ENCODE measurements at regions of chrX and their contacts with region 1.

Region 1: DNA sequence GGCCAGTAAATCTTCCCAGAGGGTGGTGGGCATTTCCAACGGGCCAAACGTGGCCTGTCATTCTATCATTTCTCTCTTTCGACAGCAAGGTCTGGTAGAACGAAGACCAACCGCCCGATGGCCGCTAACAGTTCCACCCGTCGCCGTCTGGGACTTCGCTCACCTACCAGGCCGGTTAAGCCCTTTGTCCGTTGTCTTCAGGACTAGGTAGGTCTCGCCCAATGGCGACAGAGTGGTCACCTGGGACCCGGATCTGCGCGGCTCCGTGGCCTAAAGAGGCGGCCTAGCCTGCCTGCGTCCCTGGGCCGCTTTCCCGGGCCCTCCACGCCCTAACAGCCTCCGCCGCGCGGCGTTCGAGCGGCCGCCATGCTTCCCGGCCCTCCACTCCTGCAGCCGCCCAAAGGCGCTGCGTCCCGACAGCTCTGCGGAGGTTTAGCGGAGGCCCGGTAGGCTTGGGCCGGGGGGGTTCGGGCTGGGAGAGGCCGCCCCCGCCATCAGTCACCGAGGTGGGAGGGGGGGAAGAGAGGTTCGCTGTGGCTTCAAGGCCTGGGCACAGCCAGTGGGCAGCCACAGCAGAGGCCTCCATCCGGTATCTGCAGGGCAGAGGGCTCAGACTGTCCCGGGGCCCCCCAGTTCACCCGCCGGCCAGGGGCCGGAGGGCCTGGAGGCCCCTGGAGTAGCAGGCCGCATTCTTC is 194.0 kb upstream of the BRWD3 start:
- DNase-seq: no peak
- ATAC-seq: no peak
- H3K4me3 ChIP-seq: no peak overlapping the region
- H3K27ac ChIP-seq: no peak overlapping the region
- H3K4me1 ChIP-seq: no peaks in the 10 kb centered on the region
- H3K27me3 ChIP-seq: no peaks in the 10 kb centered on the region
- CTCF ChIP-seq: no peak
- POLR2A ChIP-seq: no peak
- RAD21 ChIP-seq: no peak

Region 2: GRCh38 chrX:79444694-79445210 is 1558.9 kb before region 1 on chrX:
- CTCF ChIA-PET with region 1: no interaction called
- POLR2A ChIA-PET with region 1: no interaction called
- dilution Hi-C with region 1: no loop called
- in situ Hi-C with region 1: no loop called
- intact Hi-C with region 1: loop called (anchors 5 kb)
- DNase-seq: no peak
- ATAC-seq: no peak
- H3K4me3 ChIP-seq: no peak overlapping the region
- H3K27ac ChIP-seq: no peak overlapping the region
- H3K4me1 ChIP-seq: no peaks in the 10 kb centered on the region
- H3K27me3 ChIP-seq: no peaks in the 10 kb centered on the region
- CTCF ChIP-seq: no peak
- POLR2A ChIP-seq: no peak
- RAD21 ChIP-seq: no peak